K562 (cell line): ENCODE measurements at regions of chr12 and their contacts with region 1.

Region 1: GRCh38 chr12:54439521-54440255 is 20.6 kb upstream of the ITGA5 start:
- DNase-seq: peak; percentile 58 to 72 (median 70)
- ATAC-seq: peak; percentile 94
- H3K4me3 ChIP-seq: no peak overlapping the region
- H3K27ac ChIP-seq: peak overlapping the region; percentile 35; the same call in 1 of the 3 replicates
- H3K4me1 ChIP-seq: peaks cover 0 to 16% of the 10 kb centered on the region in 2 experiments; a peak in 3 of 5 replicates
- H3K27me3 ChIP-seq: no peaks in the 10 kb centered on the region
- CTCF ChIP-seq: peak; percentile 85 to 95 (median 87)
- EP300 ChIP-seq: no peak
- POLR2A ChIP-seq: no peak
- RAD21 ChIP-seq: peak; percentile 96 to 97

Region 2: DNA sequence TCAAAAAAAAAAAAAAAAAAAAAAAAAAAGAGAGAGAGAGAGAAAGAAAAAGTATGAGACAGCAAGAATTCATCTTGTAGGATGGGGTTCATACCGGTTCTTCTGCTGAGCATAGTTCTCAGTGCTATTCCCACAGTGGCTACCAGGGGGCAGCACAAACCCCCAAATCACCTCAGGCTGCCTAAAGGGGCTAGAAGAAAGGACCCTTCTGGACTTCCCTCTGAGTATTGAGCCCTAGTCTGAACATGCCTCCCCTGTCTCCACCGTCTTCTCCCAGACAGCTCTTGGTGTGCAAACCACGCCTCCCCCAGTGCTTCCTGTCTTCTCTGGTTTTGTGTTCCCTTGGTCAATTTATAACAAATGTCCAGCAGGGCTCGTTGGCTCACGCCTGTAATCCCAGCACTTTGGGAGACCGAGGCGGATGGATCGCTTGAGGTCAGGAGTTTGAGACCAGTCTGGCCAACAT is 219.6 kb before region 1 on chr12:
- CTCF ChIA-PET with region 1: no interaction called
- POLR2A ChIA-PET with region 1: no interaction called
- in situ Hi-C with region 1: no loop called
- intact Hi-C with region 1: loop called (anchors 5 kb)
- DNase-seq: peak; percentile 75 to 88 (median 78)
- ATAC-seq: peak; percentile 81
- H3K4me3 ChIP-seq: no peak overlapping the region
- H3K27ac ChIP-seq: peak overlapping the region; percentile 66
- H3K4me1 ChIP-seq: peaks cover 29 to 34% of the 10 kb centered on the region in 2 experiments; a peak in 4 of 5 replicates
- H3K27me3 ChIP-seq: no peaks in the 10 kb centered on the region
- CTCF ChIP-seq: peak; percentile 91 to 94 (median 93)
- EP300 ChIP-seq: no peak
- POLR2A ChIP-seq: no peak
- RAD21 ChIP-seq: peak; percentile 95 to 98

Region 3: DNA sequence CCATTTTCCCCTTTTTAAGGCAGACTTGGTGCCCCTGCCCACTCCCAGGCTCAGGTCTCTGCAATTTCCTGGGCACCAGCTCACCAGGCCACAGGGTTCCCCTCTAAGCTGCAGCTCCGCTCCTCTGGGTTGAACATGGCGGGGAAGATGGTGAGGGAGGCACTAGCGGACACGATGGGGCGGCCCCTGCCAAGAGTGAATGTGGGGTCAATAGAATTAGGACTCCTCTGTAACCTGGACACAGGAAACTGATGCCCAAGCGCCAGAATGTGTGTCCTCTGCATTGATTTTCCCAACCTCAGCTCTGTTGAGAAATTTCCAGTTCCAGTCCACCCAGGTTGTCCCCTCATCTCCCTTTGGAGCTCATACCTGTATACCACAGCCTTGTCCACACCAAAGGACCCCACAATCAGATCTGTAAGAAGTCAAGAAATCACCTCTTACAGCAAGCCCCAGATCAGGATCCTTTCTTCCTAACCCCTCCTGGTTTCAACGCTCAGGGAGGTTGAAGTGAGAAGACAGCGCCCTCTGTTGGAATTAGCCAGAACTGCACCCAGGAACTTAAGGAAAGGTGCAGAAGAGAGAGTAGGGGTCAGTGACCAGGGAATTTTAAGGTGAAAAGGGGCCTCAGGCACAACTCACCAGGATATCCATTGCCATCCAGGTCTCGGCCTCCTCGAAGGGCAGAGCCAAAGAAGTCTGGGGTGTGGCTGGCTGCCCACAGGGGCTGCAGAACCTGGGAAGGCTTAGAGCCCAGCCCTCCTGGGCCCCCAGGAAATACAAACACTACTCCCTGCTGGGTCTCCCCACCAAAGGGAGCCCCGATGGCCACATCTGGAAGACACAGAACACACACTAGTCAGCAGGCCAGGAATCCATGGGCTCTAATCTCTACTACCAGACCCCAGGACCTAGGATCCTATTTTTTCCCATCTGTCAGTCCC is 35.4 kb before region 1 on chr12:
- CTCF ChIA-PET with region 1: interaction called, 58 read pairs
- POLR2A ChIA-PET with region 1: interaction called, 14 read pairs
- in situ Hi-C with region 1: loop called (anchors 10 kb)
- intact Hi-C with region 1: loop called (anchors 1 kb)
- DNase-seq: peak; percentile 67 to 79 (median 68)
- ATAC-seq: peak; percentile 78
- H3K4me3 ChIP-seq: no peak overlapping the region
- H3K27ac ChIP-seq: no peak overlapping the region
- H3K4me1 ChIP-seq: peaks cover 0 to 3% of the 10 kb centered on the region in 2 experiments; a peak in 2 of 5 replicates
- H3K27me3 ChIP-seq: no peaks in the 10 kb centered on the region
- CTCF ChIP-seq: peak; percentile 78 to 97 (median 82)
- EP300 ChIP-seq: no peak
- POLR2A ChIP-seq: no peak
- RAD21 ChIP-seq: peak; percentile 24 to 48